Mammary epithelial cell (primary cell): ENCODE measurements at regions of chr11 and their contacts with region 1.

Region 1: GRCh38 chr11:46936138-46937110 is at the start of gene CSTPP1:
- DNase-seq: peak; percentile 84
- H3K4me3 ChIP-seq: peak within 1 kb of the TSS; percentile 63 to 84 (median 84)
- H3K27ac ChIP-seq: peak within 1 kb of the TSS; percentile 53
- H3K4me1 ChIP-seq: peaks cover 7% of the 10 kb centered on the region
- H3K27me3 ChIP-seq: no peaks in the 10 kb centered on the region
- CTCF ChIP-seq: no peak
- total RNA-seq, gene CSTPP1: 25.7 to 35.0 TPM

Region 2: DNA sequence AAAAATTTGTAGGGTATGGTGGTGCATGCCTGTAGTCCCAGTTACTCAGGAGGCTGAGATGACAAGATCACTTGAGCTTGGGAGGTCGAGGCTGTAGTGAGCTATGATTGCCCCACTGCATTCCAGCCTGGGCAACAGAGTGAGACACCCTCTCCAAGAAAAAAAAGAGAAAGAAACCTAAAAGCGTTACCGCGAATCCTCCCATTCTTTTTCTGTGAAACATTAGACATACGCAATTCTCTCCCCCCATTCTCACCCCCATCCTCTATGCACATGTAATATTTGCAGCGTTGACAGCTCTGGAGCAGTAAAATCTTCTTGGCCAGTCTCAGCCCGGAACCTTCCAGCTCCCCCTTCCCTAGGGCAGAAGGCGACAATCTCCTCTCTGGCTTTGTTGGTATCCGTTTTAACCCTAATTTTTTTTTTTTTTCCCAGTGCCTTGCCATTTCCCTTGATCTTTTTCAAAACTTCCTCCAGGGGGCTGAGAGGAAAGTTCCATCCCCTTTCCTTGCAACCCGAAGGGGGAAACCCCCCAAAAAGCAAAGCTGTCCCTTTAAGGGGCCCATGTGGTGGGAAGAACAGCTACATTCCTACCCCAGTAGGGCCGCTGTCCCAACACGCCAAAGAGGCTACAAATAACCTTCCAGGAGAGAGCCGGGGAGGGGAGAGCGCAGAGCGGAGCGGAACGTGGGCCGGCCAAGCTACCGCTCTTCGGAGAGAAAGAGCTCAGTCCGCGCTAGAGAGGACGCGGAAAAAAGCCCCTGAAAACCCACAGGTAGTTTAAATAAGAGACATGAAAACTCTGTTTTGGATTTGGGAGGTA is 19.9 kb before region 1 on chr11:
- CTCF ChIA-PET with region 1: no interaction called
- dilution Hi-C with region 1: no loop called
- in situ Hi-C with region 1: no loop called
- intact Hi-C with region 1: loop called (anchors 2 kb)
- DNase-seq: peak; percentile 81
- H3K4me3 ChIP-seq: peak overlapping the region; percentile 57 to 66 (median 62)
- H3K27ac ChIP-seq: peak overlapping the region; percentile 44
- H3K4me1 ChIP-seq: peaks cover 43% of the 10 kb centered on the region
- H3K27me3 ChIP-seq: no peaks in the 10 kb centered on the region
- CTCF ChIP-seq: peak in 1 of 2 donors; percentile 15

Region 3: GRCh38 chr11:47033439-47033838 is 97.0 kb after region 1 on chr11:
- CTCF ChIA-PET with region 1: no interaction called
- dilution Hi-C with region 1: no loop called
- in situ Hi-C with region 1: loop called in 1 of 2 experiments (anchors 25 kb)
- intact Hi-C with region 1: no loop called
- DNase-seq: no peak
- H3K4me3 ChIP-seq: no peak overlapping the region
- H3K27ac ChIP-seq: no peak overlapping the region
- H3K4me1 ChIP-seq: no peaks in the 10 kb centered on the region
- H3K27me3 ChIP-seq: no peaks in the 10 kb centered on the region
- CTCF ChIP-seq: no peak

Region 4: GRCh38 chr11:47071791-47072261 is 135.4 kb after region 1 on chr11:
- CTCF ChIA-PET with region 1: interaction called, 18 read pairs
- dilution Hi-C with region 1: no loop called
- in situ Hi-C with region 1: no loop called
- intact Hi-C with region 1: no loop called
- DNase-seq: peak; percentile 1
- H3K4me3 ChIP-seq: no peak overlapping the region
- H3K27ac ChIP-seq: no peak overlapping the region
- H3K4me1 ChIP-seq: no peaks in the 10 kb centered on the region
- H3K27me3 ChIP-seq: no peaks in the 10 kb centered on the region
- CTCF ChIP-seq: no peak